Activated CD4-positive, alpha-beta T cell treated with anti-CD3 and anti-CD28 coated beads for 36 hours (primary cell): ENCODE measurements at regions of chr2 and their contacts with region 1.

Region 1: GRCh38 chr2:218659258-218659987 is at the starts of genes BCS1L and ZNF142:
- DNase-seq: peak; percentile 98
- ATAC-seq: peak; percentile 95
- H3K4me3 Mint-ChIP-seq: peak within 1 kb of the TSS; percentile 88
- H3K27ac Mint-ChIP-seq: peak within 1 kb of the TSS; percentile 89
- H3K4me1 Mint-ChIP-seq: peaks cover 35% of the 10 kb centered on the region
- H3K27me3 Mint-ChIP-seq: no peaks in the 10 kb centered on the region
- total RNA-seq, gene BCS1L: 74.3 to 92.3 TPM
- total RNA-seq, gene ZNF142: 31.5 to 42.4 TPM

Region 2: DNA sequence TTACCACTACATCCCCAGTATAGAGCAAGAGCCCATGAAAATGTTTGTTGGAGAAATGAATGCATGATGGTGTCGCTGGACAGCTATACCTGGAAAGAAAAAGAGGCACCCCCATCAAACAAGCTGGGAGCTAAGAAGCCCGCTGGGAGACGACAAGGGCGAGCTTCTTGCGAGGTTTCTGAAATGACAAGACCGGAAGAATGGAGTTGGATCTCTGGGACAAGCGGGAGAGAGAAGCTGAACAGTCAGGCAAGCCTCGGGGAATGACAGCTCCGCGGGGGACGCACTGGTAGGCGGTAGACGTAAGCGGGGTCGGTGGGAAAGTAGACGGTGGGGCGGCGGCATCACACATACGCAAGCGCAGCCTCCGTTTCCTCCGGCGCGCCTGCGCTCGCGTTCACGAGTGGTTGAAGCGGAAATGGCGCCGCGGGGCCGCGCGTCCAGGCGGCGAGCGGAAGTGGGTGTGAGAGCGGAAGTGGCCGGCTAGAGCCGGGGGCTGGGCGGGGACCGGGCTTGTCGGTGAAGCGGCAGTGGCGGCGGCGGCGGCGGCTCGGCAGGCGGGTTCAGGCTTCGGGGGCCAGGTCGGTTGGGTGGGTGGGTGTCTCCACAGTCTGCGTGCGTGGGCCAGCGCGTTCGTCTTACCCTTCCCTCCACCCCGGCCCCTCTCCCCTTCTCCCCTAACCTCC is 442.6 kb before region 1 on chr2 and contains the start of gene ARPC2:
- CTCF ChIA-PET with region 1: no interaction called
- POLR2A ChIA-PET with region 1: no interaction called
- intact Hi-C with region 1: loop called in 1 of 2 experiments (anchors 1 kb)
- DNase-seq: peak; percentile 96
- ATAC-seq: peak; percentile 64
- H3K4me3 Mint-ChIP-seq: peak within 1 kb of the TSS; percentile 81
- H3K27ac Mint-ChIP-seq: peak within 1 kb of the TSS; percentile 96
- H3K4me1 Mint-ChIP-seq: peaks cover 34% of the 10 kb centered on the region
- H3K27me3 Mint-ChIP-seq: no peaks in the 10 kb centered on the region
- total RNA-seq, gene ARPC2: 563 to 632 TPM

Region 3: DNA sequence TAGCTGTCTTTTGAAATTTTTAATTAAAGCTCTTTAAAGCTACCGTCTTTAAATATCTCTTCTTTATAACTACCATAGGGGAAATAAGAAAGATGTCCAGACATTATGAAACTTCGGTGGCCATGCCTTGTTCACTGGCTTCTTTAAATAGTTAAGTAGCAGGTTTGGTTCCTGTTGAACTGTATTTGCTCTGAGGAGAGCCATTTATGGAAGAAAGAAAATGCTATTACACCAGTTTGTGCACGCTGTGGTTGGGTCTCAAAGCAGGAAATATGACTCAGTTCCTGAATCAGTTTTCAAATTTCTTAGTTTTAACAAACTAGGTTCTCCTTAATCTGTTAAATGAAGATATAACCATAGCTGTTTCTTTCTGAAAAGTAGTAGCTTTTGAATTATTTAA is 430.2 kb before region 1 on chr2:
- CTCF ChIA-PET with region 1: no interaction called
- POLR2A ChIA-PET with region 1: no interaction called
- intact Hi-C with region 1: loop called in 1 of 2 experiments (anchors 5 kb)
- DNase-seq: peak; percentile 70
- ATAC-seq: peak; percentile 83
- H3K4me3 Mint-ChIP-seq: peak overlapping the region; percentile 45
- H3K27ac Mint-ChIP-seq: peak overlapping the region; percentile 95
- H3K4me1 Mint-ChIP-seq: peaks cover 77% of the 10 kb centered on the region
- H3K27me3 Mint-ChIP-seq: no peaks in the 10 kb centered on the region

Region 4: GRCh38 chr2:218292048-218293014 is 367.1 kb before region 1 on chr2 and contains the start of gene TMBIM1:
- CTCF ChIA-PET with region 1: interaction called, 4 read pairs
- POLR2A ChIA-PET with region 1: no interaction called
- intact Hi-C with region 1: loop called in 1 of 2 experiments (anchors 1 kb)
- DNase-seq: peak; percentile 87
- ATAC-seq: peak; percentile 84
- H3K4me3 Mint-ChIP-seq: peak within 1 kb of the TSS; percentile 87
- H3K27ac Mint-ChIP-seq: peak within 1 kb of the TSS; percentile 91
- H3K4me1 Mint-ChIP-seq: peaks cover 53% of the 10 kb centered on the region
- H3K27me3 Mint-ChIP-seq: no peaks in the 10 kb centered on the region
- total RNA-seq, gene TMBIM1: 51.1 to 54.0 TPM

Region 5: GRCh38 chr2:218406209-218406948 is 253.0 kb before region 1 on chr2:
- CTCF ChIA-PET with region 1: interaction called, 4 read pairs
- POLR2A ChIA-PET with region 1: no interaction called
- intact Hi-C with region 1: loop called in 1 of 2 experiments (anchors 1 kb)
- DNase-seq: peak; percentile 97
- ATAC-seq: peak; percentile 88
- H3K4me3 Mint-ChIP-seq: peak overlapping the region; percentile 75
- H3K27ac Mint-ChIP-seq: peak overlapping the region; percentile 90
- H3K4me1 Mint-ChIP-seq: peaks cover 38% of the 10 kb centered on the region
- H3K27me3 Mint-ChIP-seq: peaks cover 5% of the 10 kb centered on the region

Region 6: GRCh38 chr2:218648088-218648786 is 11.2 kb before region 1 on chr2:
- CTCF ChIA-PET with region 1: interaction called, 38 read pairs
- POLR2A ChIA-PET with region 1: interaction called, 5 read pairs
- intact Hi-C with region 1: no loop called
- DNase-seq: peak; percentile 72
- ATAC-seq: peak; percentile 88
- H3K4me3 Mint-ChIP-seq: no peak overlapping the region
- H3K27ac Mint-ChIP-seq: no peak overlapping the region
- H3K4me1 Mint-ChIP-seq: peaks cover 12% of the 10 kb centered on the region
- H3K27me3 Mint-ChIP-seq: no peaks in the 10 kb centered on the region

Region 7: GRCh38 chr2:218671654-218672566 is 12.5 kb after region 1 on chr2 and contains the starts of genes RNF25 and STK36:
- CTCF ChIA-PET with region 1: interaction called, 33 read pairs
- POLR2A ChIA-PET with region 1: interaction called, 17 read pairs
- intact Hi-C with region 1: loop called (anchors 1 kb)
- DNase-seq: peak; percentile 90
- ATAC-seq: peak; percentile 98
- H3K4me3 Mint-ChIP-seq: peak within 1 kb of the TSS; percentile 95
- H3K27ac Mint-ChIP-seq: peak within 1 kb of the TSS; percentile 87
- H3K4me1 Mint-ChIP-seq: peaks cover 22% of the 10 kb centered on the region
- H3K27me3 Mint-ChIP-seq: no peaks in the 10 kb centered on the region
- total RNA-seq, gene RNF25: 14.1 to 29.2 TPM
- total RNA-seq, gene STK36: 13.1 to 19.3 TPM